ENCODE measurements at regions of chr13 and their contacts with region 1.

Region 1: DNA sequence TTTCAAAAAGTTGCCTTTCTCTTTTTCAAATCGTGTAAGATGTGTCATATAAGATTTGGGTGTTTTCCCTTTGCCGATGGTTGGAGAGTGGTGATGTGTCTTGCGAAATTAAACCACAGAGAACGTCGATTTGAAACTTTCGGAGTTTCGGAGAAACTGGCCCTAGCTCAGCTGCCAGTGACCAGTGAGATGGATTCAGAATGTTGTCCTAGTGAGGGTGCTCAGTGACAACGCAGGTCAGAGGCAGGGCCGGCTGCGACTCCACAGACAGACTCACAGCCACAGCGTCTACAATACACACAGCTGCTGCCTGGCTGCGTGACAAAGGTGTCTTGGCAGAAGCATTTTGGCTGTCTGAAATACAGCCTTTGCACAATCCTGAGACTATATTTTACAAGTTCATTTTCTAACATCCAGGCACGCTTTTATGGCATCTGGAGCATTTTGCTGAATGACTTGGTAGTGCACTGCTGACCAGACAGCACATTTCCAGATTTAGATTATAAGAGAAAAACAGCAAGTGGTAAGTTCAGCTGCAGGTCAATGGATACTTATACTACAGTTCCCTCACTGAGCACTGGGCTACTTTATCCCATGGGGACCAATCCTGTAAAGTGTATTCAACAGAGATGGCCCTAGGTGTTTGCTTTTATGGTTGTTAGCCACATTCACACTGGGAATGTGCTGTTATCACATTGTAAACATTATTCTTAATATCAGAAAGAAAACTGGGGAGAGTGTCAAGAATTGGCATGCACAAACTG is 207.5 kb downstream of the KCNRG start:
- H3K4me3 Mint-ChIP-seq: peak overlapping the region; percentile 51
- H3K27ac Mint-ChIP-seq: peak overlapping the region; percentile 55
- H3K4me1 Mint-ChIP-seq: peaks cover 42% of the 10 kb centered on the region
- H3K27me3 Mint-ChIP-seq: peaks cover 2% of the 10 kb centered on the region

Region 2: GRCh38 chr13:50130123-50130946 is 92.4 kb before region 1 on chr13:
- intact Hi-C with region 1: loop called (anchors 5 kb)
- H3K4me3 Mint-ChIP-seq: peak overlapping the region; percentile 77
- H3K27ac Mint-ChIP-seq: peak overlapping the region; percentile 76
- H3K4me1 Mint-ChIP-seq: peaks cover 66% of the 10 kb centered on the region
- H3K27me3 Mint-ChIP-seq: peaks cover 59% of the 10 kb centered on the region

Measured in dendritic cell treated with granulocyte-macrophage colony-stimulating factor and Interleukin-4, amounts not matched to agents 40 ng/mL and 50 ng/mL, for 4 days (primary cell).